Heart left ventricle (tissue), 16 donors: ENCODE measurements at regions of chrX and their contacts with region 1.

Region 1: DNA sequence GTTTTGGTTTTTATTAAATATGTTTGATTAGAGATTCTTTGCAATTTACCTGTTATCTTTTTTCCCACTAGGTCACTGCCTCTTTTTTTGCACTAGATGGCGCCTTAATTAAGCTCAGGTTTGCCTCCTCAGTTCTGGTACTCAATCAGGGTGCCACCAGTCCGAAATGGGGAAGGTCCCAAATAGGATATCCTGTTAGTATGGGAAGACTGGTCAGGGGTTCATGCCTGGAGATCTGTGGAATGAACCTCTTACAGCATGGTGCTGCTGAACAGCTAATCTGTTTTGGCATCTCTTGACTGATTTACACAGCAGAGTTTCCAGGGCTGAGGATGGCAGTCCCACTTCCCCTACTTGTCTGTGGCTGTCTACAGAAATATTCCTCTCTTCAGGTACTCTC is 24.2 kb upstream of the VSIG1 start:
- DNase-seq: no peak
- ATAC-seq: no peak
- H3K4me3 ChIP-seq: no peak overlapping the region
- H3K27ac ChIP-seq: no peak overlapping the region
- H3K4me1 ChIP-seq: no peaks in the 10 kb centered on the region
- H3K27me3 ChIP-seq: peaks cover 0 to 15% (median 0%) of the 10 kb centered on the region in 9 donors
- CTCF ChIP-seq: peak; percentile 25 to 50 (median 38)
- POLR2A ChIP-seq: no peak

Region 2: GRCh38 chrX:108070891-108071290 is 50.3 kb after region 1 on chrX:
- intact Hi-C with region 1: loop called in 4 of 10 experiments (anchors 2 to 10 kb)
- DNase-seq: no peak
- ATAC-seq: no peak
- H3K4me3 ChIP-seq: no peak overlapping the region
- H3K27ac ChIP-seq: no peak overlapping the region
- H3K4me1 ChIP-seq: no peaks in the 10 kb centered on the region
- H3K27me3 ChIP-seq: peaks cover 0 to 44% (median 0%) of the 10 kb centered on the region in 9 donors
- CTCF ChIP-seq: no peak
- POLR2A ChIP-seq: no peak

Region 3: GRCh38 chrX:108138814-108139702 is 118.4 kb after region 1 on chrX:
- intact Hi-C with region 1: loop called in 5 of 10 experiments (anchors 2 to 5 kb)
- DNase-seq: no peak
- ATAC-seq: peak in 2 of 4 donors; percentile 30 to 34
- H3K4me3 ChIP-seq: no peak overlapping the region
- H3K27ac ChIP-seq: no peak overlapping the region
- H3K4me1 ChIP-seq: no peaks in the 10 kb centered on the region
- H3K27me3 ChIP-seq: no peaks in the 10 kb centered on the region
- CTCF ChIP-seq: peak; percentile 24 to 56 (median 44)
- POLR2A ChIP-seq: no peak